K562 (cell line): ENCODE measurements at regions of chr17 and their contacts with region 1.

Region 1: DNA sequence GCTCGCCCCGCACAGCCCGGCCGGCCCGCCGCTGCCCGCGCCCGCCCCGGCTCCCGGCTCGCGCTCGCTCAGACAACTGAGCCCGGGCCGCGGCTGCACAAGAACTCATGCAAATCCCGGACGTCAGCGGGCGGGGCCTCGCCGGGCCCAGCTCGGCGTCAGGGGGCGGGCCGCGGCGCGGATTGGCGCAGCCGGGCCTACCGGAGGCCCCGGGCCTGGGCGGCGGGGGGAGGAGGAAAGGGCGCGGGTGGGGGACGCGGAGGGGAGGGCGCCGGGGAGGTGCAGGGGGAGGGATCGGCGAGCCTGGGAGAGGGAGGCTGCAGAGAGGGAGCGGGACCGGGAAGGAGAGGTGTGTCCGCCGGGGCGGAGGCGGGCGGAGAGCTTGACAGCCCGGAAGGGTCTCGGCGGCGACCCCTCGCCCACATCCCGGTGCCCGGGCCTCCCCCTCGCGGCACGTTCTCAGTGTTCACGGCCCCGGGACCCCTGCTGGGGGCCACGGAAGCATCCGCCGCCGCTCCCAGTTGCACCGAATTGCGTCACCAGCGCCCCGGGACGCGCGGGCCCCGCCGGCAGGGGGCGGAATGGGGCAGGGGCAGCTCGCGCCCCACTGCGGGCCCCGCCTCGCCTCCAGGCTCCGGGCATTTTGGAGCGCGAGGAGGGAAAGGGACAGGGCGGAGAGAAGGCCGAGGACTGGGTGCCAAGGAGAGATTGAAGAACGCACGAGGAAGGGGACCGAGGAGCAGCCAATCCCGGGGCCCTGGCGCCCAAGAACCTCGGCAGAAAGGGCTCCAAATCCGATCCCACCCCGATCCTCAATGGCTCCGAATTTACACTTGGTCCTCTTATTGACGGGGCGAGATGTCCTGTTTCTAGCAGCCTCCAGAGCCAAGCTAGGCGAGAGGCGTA is at the start of gene CBX4:
- DNase-seq: peak; percentile 92 to 97 (median 94)
- ATAC-seq: peak; percentile 63
- H3K4me3 ChIP-seq: peak within 1 kb of the TSS; percentile 74
- H3K27ac ChIP-seq: peak within 1 kb of the TSS; percentile 95
- H3K4me1 ChIP-seq: peaks cover 32 to 85% of the 10 kb centered on the region in 2 experiments
- H3K27me3 ChIP-seq: no peaks in the 10 kb centered on the region
- CTCF ChIP-seq: peak; percentile 90 to 93 (median 91)
- EP300 ChIP-seq: peak; percentile 90
- POLR2A ChIP-seq: peak; percentile 73
- RAD21 ChIP-seq: peak; percentile 78 to 79
- polyA plus RNA-seq, gene CBX4: 0.98 to 1.1 TPM

Region 2: DNA sequence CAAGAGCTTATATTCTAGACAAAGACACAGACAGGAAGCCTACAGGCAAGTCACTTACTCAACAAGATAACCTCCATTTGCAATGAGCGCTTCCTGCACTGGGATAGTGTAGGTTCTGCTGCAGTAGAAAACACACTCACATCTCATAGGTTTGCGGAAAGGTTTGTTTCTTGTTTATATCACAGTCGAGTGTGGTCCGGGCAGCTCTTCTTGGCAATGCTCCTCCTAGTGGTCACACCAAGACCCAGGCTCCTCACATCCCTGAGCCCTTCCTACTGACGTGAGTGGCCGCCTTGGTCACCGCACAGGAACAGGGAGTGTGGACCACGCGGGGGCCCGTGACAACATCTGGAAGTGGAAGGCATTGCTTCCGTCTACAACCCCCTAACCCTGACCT is 180.8 kb before region 1 on chr17:
- CTCF ChIA-PET with region 1: no interaction called
- POLR2A ChIA-PET with region 1: no interaction called
- in situ Hi-C with region 1: no loop called
- intact Hi-C with region 1: no loop called
- DNase-seq: peak; percentile 30 to 43 (median 40)
- ATAC-seq: peak; percentile 88
- H3K4me3 ChIP-seq: no peak overlapping the region
- H3K27ac ChIP-seq: no peak overlapping the region
- H3K4me1 ChIP-seq: no peaks in the 10 kb centered on the region
- H3K27me3 ChIP-seq: peaks cover 21 to 22% of the 10 kb centered on the region in 2 experiments
- CTCF ChIP-seq: peak; percentile 46 to 65 (median 56)
- EP300 ChIP-seq: no peak
- POLR2A ChIP-seq: no peak
- RAD21 ChIP-seq: no peak

Region 3: GRCh38 chr17:79741751-79742588 is 97.6 kb before region 1 on chr17:
- CTCF ChIA-PET with region 1: interaction called, 6 read pairs
- POLR2A ChIA-PET with region 1: interaction called, 8 read pairs
- in situ Hi-C with region 1: no loop called
- intact Hi-C with region 1: loop called (anchors 10 kb)
- DNase-seq: peak; percentile 84 to 93 (median 92)
- ATAC-seq: peak; percentile 89
- H3K4me3 ChIP-seq: no peak overlapping the region
- H3K27ac ChIP-seq: no peak overlapping the region
- H3K4me1 ChIP-seq: peaks cover 4 to 33% of the 10 kb centered on the region in 2 experiments; a peak in 4 of 5 replicates
- H3K27me3 ChIP-seq: peaks cover 29 to 37% of the 10 kb centered on the region in 2 experiments
- CTCF ChIP-seq: peak; percentile 87 to 96 (median 88)
- EP300 ChIP-seq: no peak
- POLR2A ChIP-seq: no peak
- RAD21 ChIP-seq: peak; percentile 55 to 77

Region 4: GRCh38 chr17:79796763-79797491 is 42.7 kb before region 1 on chr17 and contains the start of gene CBX8:
- CTCF ChIA-PET with region 1: interaction called, 4 read pairs
- POLR2A ChIA-PET with region 1: interaction called, 18 read pairs
- in situ Hi-C with region 1: loop called (anchors 5 kb)
- intact Hi-C with region 1: loop called (anchors 5 kb)
- DNase-seq: peak; percentile 95 to 100 (median 98)
- ATAC-seq: peak; percentile 93
- H3K4me3 ChIP-seq: peak within 1 kb of the TSS; percentile 84
- H3K27ac ChIP-seq: peak within 1 kb of the TSS; percentile 96
- H3K4me1 ChIP-seq: peaks cover 21 to 71% of the 10 kb centered on the region in 2 experiments
- H3K27me3 ChIP-seq: no peaks in the 10 kb centered on the region
- CTCF ChIP-seq: peak in 1 of 3 experiments; percentile 18; a peak in 2 of 6 replicates
- EP300 ChIP-seq: no peak; the same call in 1 of the 2 replicates
- POLR2A ChIP-seq: peak; percentile 80
- RAD21 ChIP-seq: no peak; a peak in 2 of 4 replicates
- polyA plus RNA-seq, gene CBX8: 0.08 to 0.21 TPM

Region 5: GRCh38 chr17:79810130-79811010 is 29.2 kb before region 1 on chr17:
- CTCF ChIA-PET with region 1: interaction called, 4 read pairs
- POLR2A ChIA-PET with region 1: interaction called, 386 read pairs
- in situ Hi-C with region 1: no loop called
- intact Hi-C with region 1: no loop called
- DNase-seq: peak; percentile 88 to 95 (median 92)
- ATAC-seq: peak; percentile 95
- H3K4me3 ChIP-seq: peak overlapping the region; percentile 49
- H3K27ac ChIP-seq: peak overlapping the region; percentile 91; the same call in 2 of the 3 replicates
- H3K4me1 ChIP-seq: peaks cover 37 to 78% of the 10 kb centered on the region in 2 experiments
- H3K27me3 ChIP-seq: no peaks in the 10 kb centered on the region
- CTCF ChIP-seq: no peak
- EP300 ChIP-seq: no peak; the same call in 1 of the 2 replicates
- POLR2A ChIP-seq: peak; percentile 46
- RAD21 ChIP-seq: no peak

Region 6: GRCh38 chr17:79850571-79851461 is 11.2 kb after region 1 on chr17:
- CTCF ChIA-PET with region 1: no interaction called
- POLR2A ChIA-PET with region 1: interaction called, 25 read pairs
- in situ Hi-C with region 1: no loop called
- intact Hi-C with region 1: no loop called
- DNase-seq: peak; percentile 43 to 52 (median 49)
- ATAC-seq: peak; percentile 10; the same call in 2 of the 3 replicates
- H3K4me3 ChIP-seq: no peak overlapping the region
- H3K27ac ChIP-seq: no peak overlapping the region
- H3K4me1 ChIP-seq: peaks cover 12 to 21% of the 10 kb centered on the region in 2 experiments
- H3K27me3 ChIP-seq: peaks cover 0 to 16% of the 10 kb centered on the region in 2 experiments; a peak in 3 of 5 replicates
- CTCF ChIP-seq: no peak
- EP300 ChIP-seq: no peak
- POLR2A ChIP-seq: no peak
- RAD21 ChIP-seq: no peak